ENCODE measurements at regions of chr6 and their contacts with region 1.

Region 1: GRCh38 chr6:31139599-31139998 is 733 bp upstream of the PSORS1C2 start:
- DNase-seq: no peak
- H3K4me3 ChIP-seq: no peak overlapping the region
- H3K4me3 Mint-ChIP-seq: no peak overlapping the region
- H3K27ac Mint-ChIP-seq: no peak overlapping the region
- H3K4me1 ChIP-seq: 0 out of 2 replicates have a peak, but pooled peaks cover 3% of the 10 kb centered on the region
- H3K4me1 Mint-ChIP-seq: peaks cover 13% of the 10 kb centered on the region
- H3K27me3 ChIP-seq: no peaks in the 10 kb centered on the region
- H3K27me3 Mint-ChIP-seq: no peaks in the 10 kb centered on the region
- CTCF ChIP-seq: no peak

Region 2: DNA sequence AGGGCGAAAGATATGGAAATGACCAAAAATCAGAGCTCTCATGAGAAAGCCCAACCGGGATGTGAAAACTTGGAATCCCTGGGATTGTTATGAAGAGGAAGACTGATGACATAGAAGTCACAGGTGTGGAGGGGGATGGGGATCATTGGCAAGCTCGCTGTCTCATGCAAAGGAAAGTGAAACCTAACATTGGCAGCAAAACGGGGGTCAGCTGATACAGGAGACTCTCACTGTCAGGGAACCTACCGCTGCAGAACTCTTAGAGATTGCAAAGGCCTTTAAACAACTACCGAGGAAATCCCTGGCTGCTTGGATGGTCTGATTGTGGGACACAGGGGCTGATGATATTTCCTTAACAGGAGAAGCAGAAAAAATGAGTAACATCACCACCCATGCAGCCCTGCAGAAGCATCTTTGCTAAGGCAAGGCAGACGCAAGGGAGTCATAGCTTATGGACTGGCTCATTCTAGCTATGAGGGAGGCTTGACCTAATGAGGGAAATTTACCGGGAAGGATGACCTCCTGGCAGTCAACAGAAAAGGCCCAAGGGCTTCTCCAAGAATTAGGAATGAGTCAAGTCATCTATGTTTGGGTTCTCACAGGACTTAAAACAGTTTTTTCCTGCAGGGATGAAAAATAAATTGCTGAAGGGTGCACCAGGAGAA is 149.0 kb before region 1 on chr6:
- CTCF ChIA-PET with region 1: no interaction called
- POLR2A ChIA-PET with region 1: no interaction called
- intact Hi-C with region 1: no loop called
- DNase-seq: no peak
- H3K4me3 ChIP-seq: no peak overlapping the region
- H3K4me3 Mint-ChIP-seq: no peak overlapping the region
- H3K27ac Mint-ChIP-seq: no peak overlapping the region
- H3K4me1 ChIP-seq: peaks cover 17% of the 10 kb centered on the region
- H3K4me1 Mint-ChIP-seq: peaks cover 7% of the 10 kb centered on the region
- H3K27me3 ChIP-seq: no peaks in the 10 kb centered on the region
- H3K27me3 Mint-ChIP-seq: no peaks in the 10 kb centered on the region
- CTCF ChIP-seq: no peak

Region 3: DNA sequence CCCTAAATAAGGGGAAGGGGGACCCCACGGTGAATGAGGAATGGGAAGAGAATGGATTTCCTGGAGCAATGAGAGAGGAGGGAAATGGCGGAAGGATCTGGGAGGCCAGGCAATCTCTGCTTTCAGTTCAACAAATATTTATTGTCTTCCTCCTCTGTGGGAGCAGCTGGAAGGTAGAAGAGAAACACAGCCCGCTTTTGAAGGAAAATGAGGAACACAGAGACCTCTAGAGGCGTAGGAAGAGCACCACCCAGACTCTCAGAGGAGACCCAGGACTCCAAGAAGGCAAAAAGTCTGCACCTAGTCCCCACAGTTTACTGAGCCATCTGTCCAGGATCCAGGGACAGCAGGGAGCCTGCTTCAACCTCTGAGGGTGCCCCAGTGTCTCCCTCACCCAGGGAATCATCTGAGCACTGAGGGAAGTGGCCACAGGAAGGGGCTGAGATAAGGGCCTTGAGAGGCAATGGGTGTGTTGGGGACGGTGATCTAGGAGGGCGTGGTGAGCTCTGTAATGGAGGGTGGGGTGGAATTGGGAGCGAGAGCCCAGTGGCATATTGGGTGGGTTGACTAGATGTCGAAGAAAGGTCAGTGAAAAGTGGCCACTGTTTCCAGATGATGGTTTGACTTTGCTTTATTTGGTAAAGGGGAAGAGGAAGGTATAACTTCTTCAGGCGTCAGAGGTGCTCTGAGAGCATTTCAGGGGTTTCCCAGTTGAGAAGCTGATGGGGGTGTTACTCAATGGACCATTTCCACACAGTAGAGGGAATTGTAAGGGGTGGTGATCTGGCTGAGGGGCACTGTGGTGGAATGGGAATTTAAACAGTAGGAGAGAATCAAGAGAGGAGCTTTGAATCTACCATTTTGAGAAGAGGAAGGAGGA is 24.4 kb before region 1 on chr6:
- CTCF ChIA-PET with region 1: no interaction called
- POLR2A ChIA-PET with region 1: no interaction called
- intact Hi-C with region 1: no loop called
- DNase-seq: no peak
- H3K4me3 ChIP-seq: no peak overlapping the region
- H3K4me3 Mint-ChIP-seq: peak overlapping the region; percentile 12
- H3K27ac Mint-ChIP-seq: peak overlapping the region; percentile 83
- H3K4me1 ChIP-seq: peaks cover 31% of the 10 kb centered on the region
- H3K4me1 Mint-ChIP-seq: peaks cover 23% of the 10 kb centered on the region
- H3K27me3 ChIP-seq: no peaks in the 10 kb centered on the region
- H3K27me3 Mint-ChIP-seq: no peaks in the 10 kb centered on the region
- CTCF ChIP-seq: peak in 1 of 2 experiments; percentile 9

Region 4: GRCh38 chr6:31366693-31367470 is 227.3 kb after region 1 on chr6:
- CTCF ChIA-PET with region 1: interaction called, 12 read pairs
- POLR2A ChIA-PET with region 1: no interaction called
- intact Hi-C with region 1: loop called (anchors 2 kb)
- DNase-seq: peak; percentile 84 to 88
- H3K4me3 ChIP-seq: no peak overlapping the region
- H3K4me3 Mint-ChIP-seq: peak overlapping the region; percentile 52
- H3K27ac Mint-ChIP-seq: no peak overlapping the region
- H3K4me1 ChIP-seq: no peaks in the 10 kb centered on the region
- H3K4me1 Mint-ChIP-seq: no peaks in the 10 kb centered on the region
- H3K27me3 ChIP-seq: peaks cover 1% of the 10 kb centered on the region; the same call in 1 of the 2 replicates
- H3K27me3 Mint-ChIP-seq: peaks cover 35% of the 10 kb centered on the region
- CTCF ChIP-seq: peak; percentile 90 to 91